Tibial artery (tissue), 4 donors: ENCODE measurements at regions of chr7 and their contacts with region 1.

Region 1: GRCh38 chr7:98755128-98755898 is 114.5 kb downstream of the TMEM130 start:
- DNase-seq: peak; percentile 28 to 91
- H3K4me3 ChIP-seq: no peak overlapping the region
- H3K27ac ChIP-seq: peak overlapping the region; percentile 50 to 68
- H3K4me1 ChIP-seq: peaks cover 0 to 37% (median 16%) of the 10 kb centered on the region in 4 donors
- H3K27me3 ChIP-seq: no peaks in the 10 kb centered on the region
- CTCF ChIP-seq: peak; percentile 15 to 23

Region 2: DNA sequence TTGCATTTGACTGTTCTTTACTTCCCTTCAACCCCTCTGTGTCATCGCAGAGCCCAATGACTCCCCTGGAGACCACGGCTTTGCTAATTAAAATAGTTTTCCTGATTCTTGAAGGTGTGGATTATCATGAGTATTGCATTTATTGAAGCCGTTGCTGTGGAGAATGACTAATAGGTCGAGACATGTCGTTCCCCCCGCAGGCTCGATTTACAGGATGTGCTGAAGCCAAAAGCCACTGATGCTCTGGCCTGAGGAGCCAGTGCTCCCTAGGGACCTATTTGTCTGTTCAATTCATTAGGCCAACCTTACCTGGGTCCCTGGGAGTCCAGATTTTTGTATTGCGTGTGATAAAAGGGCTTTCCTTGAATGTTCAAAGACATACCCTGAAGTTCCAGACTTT is 35.9 kb before region 1 on chr7:
- intact Hi-C with region 1: no loop called
- DNase-seq: no peak
- H3K4me3 ChIP-seq: no peak overlapping the region
- H3K27ac ChIP-seq: no peak overlapping the region
- H3K4me1 ChIP-seq: no peaks in the 10 kb centered on the region
- H3K27me3 ChIP-seq: peaks cover 0 to 16% of the 10 kb centered on the region in 2 donors
- CTCF ChIP-seq: no peak

Region 3: DNA sequence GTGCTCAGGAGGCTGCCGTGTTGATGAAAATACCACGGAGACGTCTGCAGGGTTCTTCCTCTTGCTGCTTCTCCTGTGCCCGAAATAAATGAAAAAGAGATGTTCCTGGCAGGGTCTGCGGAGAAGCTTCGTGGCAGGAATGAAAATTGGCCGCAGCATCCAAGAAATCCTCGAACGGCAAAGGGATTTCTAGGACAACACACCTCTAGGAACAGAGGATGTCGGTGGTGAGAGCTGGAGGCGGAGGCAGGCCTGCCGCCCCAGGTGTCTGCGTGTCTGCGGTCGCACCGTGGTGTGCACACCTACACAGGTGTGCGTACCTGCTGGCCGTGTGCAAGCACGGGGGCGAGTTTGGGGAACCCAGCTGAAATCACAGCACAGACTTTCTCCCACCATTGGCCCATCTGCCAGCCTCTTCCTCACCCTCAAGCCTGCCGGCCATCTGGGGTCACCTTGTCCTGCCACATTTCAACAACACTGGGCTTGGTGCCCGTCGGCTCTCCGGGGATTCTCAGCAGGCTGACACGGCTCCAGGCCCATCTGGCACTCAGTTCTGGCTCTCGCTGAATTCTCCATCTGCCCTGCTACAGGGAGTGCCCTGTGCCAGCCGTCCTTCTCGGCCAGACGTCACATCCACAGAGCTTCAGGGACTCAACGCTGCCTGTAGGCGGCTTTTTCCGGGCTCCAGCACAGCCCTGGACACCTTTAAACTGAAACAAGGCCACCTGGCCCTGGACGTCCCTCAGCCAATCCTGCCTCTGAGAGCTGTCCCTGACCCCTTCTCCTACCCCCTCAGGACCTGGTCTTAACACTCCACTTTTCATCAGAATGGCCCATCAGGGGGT is 71.3 kb after region 1 on chr7:
- intact Hi-C with region 1: loop called (anchors 5 kb)
- DNase-seq: peak; percentile 81 to 98
- H3K4me3 ChIP-seq: no peak overlapping the region
- H3K27ac ChIP-seq: peak overlapping the region; percentile 70 to 84
- H3K4me1 ChIP-seq: peaks cover 0 to 40% (median 17%) of the 10 kb centered on the region in 4 donors
- H3K27me3 ChIP-seq: no peaks in the 10 kb centered on the region
- CTCF ChIP-seq: peak; percentile 61 to 68

Region 4: DNA sequence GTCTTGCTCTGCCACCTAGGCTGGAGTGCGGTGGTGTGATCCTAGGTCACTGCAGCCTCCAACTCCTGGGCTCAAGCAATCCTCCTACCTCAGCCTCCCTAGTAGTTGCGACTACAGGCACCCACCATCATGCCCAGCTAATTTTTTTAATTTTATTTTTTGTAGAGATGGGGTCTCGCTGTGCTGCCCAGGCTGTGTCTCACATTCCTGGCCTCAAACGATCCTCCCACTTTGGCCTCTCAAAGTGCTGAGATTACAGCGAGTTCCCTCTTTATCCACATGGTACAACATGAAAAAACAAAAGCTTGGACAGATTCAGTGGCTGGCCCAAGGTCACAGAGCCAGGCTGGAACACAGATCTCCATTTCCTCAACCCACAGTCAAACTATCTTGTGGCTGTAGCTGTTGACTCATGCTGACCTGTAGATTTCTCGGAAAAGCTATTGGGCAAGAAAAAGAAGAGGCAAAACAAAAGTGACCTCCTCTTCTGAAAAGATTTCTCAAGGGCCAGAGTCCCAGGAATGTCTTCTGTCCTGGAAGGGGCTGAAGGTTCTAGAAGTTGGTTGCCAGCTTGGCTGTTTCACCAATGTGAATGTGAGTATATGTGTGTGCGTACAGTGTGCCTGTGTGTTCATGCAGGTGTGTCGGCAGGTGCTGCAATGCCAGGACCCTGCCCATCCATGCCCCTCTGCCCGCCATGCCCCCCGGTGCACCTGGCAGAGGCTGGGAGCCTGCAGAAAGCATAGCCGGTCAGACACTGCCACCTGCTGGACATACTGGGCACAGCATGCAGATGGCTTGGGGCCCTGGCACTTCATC is 86.1 kb after region 1 on chr7:
- intact Hi-C with region 1: loop called (anchors 5 kb)
- DNase-seq: peak; percentile 63 to 83
- H3K4me3 ChIP-seq: no peak overlapping the region
- H3K27ac ChIP-seq: peak overlapping the region; percentile 43 to 53
- H3K4me1 ChIP-seq: peaks cover 0 to 17% (median 16%) of the 10 kb centered on the region in 4 donors
- H3K27me3 ChIP-seq: no peaks in the 10 kb centered on the region
- CTCF ChIP-seq: peak; percentile 96 to 99